Sciatic nerve (tissue), 2 donors: ENCODE measurements at regions of chr7 and their contacts with region 1.

Region 1: GRCh38 chr7:155769701-155770100 is 42.6 kb downstream of the SHH start:
- DNase-seq: no peak
- ATAC-seq: peak; percentile 85

Region 2: GRCh38 chr7:155058896-155059295 is 710.8 kb before region 1 on chr7:
- intact Hi-C with region 1: no loop called
- DNase-seq: no peak
- ATAC-seq: no peak

Region 3: GRCh38 chr7:155598810-155599210 is 170.9 kb before region 1 on chr7:
- intact Hi-C with region 1: loop called (anchors 5 kb)
- DNase-seq: peak; percentile 92
- ATAC-seq: peak; percentile 71

Region 4: DNA sequence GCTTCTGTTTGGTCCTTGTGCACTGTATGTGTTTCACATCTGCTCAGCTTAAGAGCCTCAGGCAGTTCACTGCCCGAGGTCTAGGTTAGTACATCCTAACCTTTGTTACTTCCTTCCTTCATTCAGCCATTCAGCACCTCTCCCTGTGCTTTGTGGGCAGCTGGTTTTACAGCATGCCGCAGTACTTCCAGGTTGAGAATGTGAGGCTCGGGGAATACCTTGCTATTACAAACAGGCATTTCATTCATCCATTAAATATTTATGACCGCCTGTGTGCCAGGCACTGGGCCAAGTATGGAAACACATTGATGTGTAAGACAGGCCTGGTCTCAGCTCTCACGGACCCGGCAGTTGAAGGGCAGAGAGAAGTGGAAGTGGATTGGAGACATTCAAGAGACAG is 39.9 kb before region 1 on chr7:
- intact Hi-C with region 1: no loop called
- DNase-seq: no peak
- ATAC-seq: no peak